Adrenal gland (tissue), 19 donors: ENCODE measurements at regions of chr5 and their contacts with region 1.

Region 1: DNA sequence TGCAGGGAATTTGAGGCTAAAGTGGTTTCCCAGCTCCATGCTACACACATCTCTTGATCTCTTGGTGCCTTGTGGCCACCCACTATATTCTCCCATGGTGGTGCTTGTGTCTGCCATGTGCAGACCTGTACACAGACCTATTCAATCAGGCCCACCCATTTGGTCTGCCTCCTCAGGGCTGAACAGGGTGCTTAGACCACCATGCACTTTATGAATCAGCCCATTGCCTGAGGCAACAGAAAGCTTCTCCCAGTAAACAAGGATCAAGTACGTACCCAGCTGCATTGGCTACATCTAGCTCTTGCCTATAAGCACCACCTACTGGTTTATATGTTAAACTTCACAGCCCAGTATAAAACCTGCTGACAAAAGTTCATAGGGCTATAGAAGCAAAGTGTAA is 664.3 kb upstream of the EDIL3 start:
- DNase-seq: peak in 1 of 7 donors; percentile 24
- H3K4me3 ChIP-seq: no peak overlapping the region
- H3K27ac ChIP-seq: no peak overlapping the region
- H3K4me1 ChIP-seq: no peaks in the 10 kb centered on the region
- H3K27me3 ChIP-seq: no peaks in the 10 kb centered on the region
- CTCF ChIP-seq: peak in 5 of 6 experiments; percentile 30 to 48 (median 42)
- POLR2A ChIP-seq: no peak

Region 2: DNA sequence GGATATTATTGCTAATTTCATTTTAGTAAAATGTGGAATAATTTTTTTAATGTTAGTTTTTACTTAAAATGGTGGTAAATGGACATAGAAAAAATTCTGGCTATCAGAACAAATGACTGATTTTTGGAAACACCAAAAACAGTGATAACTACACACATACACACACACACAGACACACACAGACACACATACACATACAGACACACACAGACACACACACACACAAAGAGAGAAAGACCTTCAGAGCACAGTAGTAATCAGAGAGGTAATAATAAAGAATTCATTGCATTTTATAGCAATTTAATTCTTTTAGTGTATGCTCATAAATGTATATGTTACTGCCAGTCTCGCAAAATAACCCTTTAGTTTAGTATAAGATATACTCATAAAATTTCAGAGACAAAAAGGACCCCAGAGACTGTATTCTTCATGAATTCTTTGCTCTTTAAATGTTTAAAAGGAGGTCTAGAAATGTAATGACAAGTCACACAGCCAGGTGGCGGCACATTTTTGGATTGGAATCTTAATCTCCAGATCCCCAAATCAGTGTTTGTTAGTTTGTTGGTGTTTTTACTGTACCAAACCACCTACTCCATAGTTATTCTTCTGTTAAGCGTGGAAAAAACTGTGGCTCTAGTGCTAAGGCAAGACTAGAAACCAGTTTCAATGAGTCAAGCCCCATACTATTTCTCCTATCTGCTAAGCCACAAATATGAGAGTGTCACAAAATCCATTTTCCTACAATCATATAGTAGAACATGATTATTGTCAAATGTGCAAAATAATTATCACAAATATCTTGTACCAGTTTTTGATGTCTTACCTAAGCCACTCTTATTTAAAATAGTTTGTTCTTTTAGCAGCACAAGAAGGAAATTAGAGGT is 774.2 kb before region 1 on chr5:
- intact Hi-C with region 1: loop called in 1 of 2 experiments (anchors 10 kb)
- DNase-seq: peak; percentile 21 to 76 (median 54)
- H3K4me3 ChIP-seq: no peak overlapping the region
- H3K27ac ChIP-seq: no peak overlapping the region
- H3K4me1 ChIP-seq: no peaks in the 10 kb centered on the region
- H3K27me3 ChIP-seq: no peaks in the 10 kb centered on the region
- CTCF ChIP-seq: peak; percentile 49 to 62 (median 56)
- POLR2A ChIP-seq: no peak

Region 3: GRCh38 chr5:84425365-84425881 is 623.6 kb before region 1 on chr5:
- intact Hi-C with region 1: no loop called
- DNase-seq: no peak
- H3K4me3 ChIP-seq: no peak overlapping the region
- H3K27ac ChIP-seq: no peak overlapping the region
- H3K4me1 ChIP-seq: no peaks in the 10 kb centered on the region
- H3K27me3 ChIP-seq: no peaks in the 10 kb centered on the region
- CTCF ChIP-seq: no peak
- POLR2A ChIP-seq: no peak

Region 4: DNA sequence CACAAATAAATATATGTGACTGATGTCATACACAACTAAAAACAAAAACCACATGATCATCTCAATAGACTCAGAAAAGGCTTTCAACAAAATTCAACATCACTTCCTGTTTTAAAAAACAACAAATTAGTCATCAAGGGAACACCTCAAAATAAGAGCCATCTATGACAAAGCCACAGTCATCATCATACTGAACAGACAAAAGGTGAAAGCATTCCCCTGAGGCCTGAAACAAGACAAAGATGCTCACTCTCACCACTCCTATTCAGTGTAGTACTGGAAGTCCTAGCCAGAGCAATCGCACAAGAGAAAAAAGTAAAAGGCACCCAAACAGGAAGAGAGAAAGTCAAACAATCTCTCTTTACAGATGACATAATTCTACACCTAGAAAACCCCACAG is 229.2 kb after region 1 on chr5:
- intact Hi-C with region 1: no loop called
- DNase-seq: no peak
- H3K4me3 ChIP-seq: no peak overlapping the region
- H3K27ac ChIP-seq: no peak overlapping the region
- H3K4me1 ChIP-seq: no peaks in the 10 kb centered on the region
- H3K27me3 ChIP-seq: no peaks in the 10 kb centered on the region
- CTCF ChIP-seq: no peak
- POLR2A ChIP-seq: no peak